Activated T-helper 2 cell treated with anti-CD3 and anti-CD28 coated beads, Interferon-gamma antibody, Interleukin-2, Interleukin-4, amounts not matched to agents 10 μg/mL and 5 μg/mL and 100 μg/mL, durations not matched to agents 14 hours and 24 hours and 36 hours (primary cell): ENCODE measurements at regions of chr22 and their contacts with region 1.

Region 1: GRCh38 chr22:30104501-30105156 is 24.4 kb downstream of the HORMAD2 start:
- DNase-seq: no peak
- H3K4me3 Mint-ChIP-seq: peak overlapping the region; percentile 26
- H3K27ac Mint-ChIP-seq: peak overlapping the region; percentile 95
- H3K4me1 Mint-ChIP-seq: peaks cover 64% of the 10 kb centered on the region
- H3K27me3 Mint-ChIP-seq: no peaks in the 10 kb centered on the region

Region 2: DNA sequence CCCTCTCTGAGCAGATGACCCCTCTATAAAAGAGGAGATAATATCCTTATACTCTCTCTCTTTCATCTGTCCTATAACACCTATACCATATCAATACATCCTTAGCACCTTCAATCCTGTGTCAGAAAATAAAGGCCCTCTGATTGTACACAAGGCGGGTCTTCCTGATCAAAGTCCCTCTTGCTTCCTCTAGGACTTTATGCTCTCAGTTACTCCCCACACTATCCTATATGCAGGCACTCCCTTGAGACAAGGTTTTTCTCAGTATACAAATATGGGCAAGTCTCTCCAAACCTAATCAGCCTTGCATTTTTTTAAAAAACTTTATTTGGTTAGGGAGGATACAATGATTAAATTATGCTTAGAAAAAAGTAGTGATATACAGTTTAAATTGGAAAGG is 41.7 kb before region 1 on chr22:
- intact Hi-C with region 1: no loop called
- DNase-seq: no peak
- H3K4me3 Mint-ChIP-seq: no peak overlapping the region
- H3K27ac Mint-ChIP-seq: no peak overlapping the region
- H3K4me1 Mint-ChIP-seq: no peaks in the 10 kb centered on the region
- H3K27me3 Mint-ChIP-seq: peaks cover 24% of the 10 kb centered on the region

Region 3: GRCh38 chr22:30169002-30169401 is 64.4 kb after region 1 on chr22:
- intact Hi-C with region 1: loop called (anchors 2 kb)
- DNase-seq: no peak
- H3K4me3 Mint-ChIP-seq: no peak overlapping the region
- H3K27ac Mint-ChIP-seq: no peak overlapping the region
- H3K4me1 Mint-ChIP-seq: peaks cover 23% of the 10 kb centered on the region
- H3K27me3 Mint-ChIP-seq: no peaks in the 10 kb centered on the region

Region 4: DNA sequence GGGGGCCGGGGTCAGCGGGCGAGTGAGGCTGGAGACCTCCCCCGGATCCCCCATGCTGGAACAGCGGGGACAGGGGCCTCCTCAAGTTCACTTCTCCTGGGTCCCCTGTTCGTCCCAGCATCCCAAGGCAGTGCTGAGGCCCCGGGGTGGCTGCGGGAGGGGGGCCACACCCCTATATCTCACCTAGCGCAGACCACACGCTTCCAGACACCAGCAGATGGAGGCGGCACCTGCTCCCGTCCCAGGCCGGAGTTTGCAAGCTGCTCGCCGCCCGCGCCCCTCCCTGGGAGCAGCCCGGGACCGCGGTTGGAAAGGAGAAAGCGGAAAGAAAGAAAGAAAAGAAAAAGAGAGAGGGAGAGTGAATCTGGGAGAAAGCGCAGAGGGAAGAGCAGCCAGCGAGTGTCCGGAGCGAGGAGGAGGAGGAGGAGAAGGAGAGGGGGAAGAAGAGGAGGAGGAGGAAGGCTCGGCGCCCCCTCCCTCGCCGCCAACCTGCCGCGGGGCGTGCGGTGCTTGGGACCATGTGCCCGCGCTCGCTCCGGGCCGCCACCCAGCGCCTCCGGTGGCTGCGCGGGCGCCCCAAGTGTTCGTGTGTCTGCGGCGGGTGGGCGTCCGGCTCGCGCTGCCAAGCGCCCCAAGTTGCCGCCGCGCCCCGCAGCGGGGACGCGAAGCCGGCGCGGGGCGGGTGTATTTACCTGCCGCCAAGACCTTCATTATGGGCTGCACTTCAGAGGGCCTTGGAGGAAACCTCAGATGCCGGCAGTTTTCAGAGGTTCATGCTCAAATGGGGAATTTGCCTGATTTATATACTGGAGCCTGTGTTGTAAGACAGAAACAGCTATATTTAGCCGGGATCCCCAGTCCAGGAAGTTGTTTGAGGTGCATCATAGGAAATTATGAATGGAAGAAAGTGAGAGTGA is 141.6 kb after region 1 on chr22 and contains the start of gene LIF:
- intact Hi-C with region 1: loop called (anchors 2 kb)
- DNase-seq: peak; percentile 65
- H3K4me3 Mint-ChIP-seq: peak within 1 kb of the TSS; percentile 99
- H3K27ac Mint-ChIP-seq: peak within 1 kb of the TSS; percentile 99
- H3K4me1 Mint-ChIP-seq: peaks cover 66% of the 10 kb centered on the region
- H3K27me3 Mint-ChIP-seq: no peaks in the 10 kb centered on the region
- total RNA-seq, gene LIF: 919 and 932 TPM in 2 replicates

Region 5: DNA sequence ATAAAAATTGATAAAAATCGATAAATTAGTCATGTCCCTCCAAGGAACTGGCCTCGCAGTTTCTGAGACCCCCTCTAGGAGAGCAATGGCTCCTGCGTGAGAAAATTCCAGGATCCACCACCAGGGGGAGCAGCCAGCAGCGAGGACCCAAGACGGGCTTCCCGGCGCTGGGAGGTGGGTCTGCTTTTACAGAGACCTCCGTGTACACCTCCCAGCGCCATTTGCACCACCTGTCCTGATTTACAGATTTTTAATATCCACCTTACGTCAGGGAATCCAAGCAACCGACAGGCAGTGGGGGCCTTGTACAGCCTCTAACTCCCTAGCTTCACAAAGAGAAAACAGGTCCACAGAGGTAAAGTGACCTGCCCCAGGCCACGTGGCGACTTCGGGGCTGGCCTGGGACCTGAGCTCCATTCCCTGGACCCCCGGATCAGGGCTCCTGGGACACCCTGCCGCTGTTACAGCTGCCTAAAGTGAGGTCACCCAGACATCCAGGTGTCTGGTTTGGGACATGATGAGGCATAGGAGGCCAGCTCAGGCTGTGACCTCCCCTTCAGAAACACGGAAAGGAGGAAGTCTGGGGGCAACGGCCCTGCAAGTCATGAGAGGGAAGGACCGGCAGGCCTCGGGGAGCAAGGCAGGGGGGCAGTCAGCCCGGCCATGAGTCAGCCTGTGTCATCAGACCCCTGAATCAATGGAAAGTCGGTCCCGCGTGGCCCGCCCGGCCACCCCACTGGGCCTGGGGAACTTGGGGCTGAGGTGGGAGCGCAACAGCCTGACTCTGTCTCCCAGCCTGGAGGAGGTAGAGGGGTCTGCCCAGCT is 158.5 kb after region 1 on chr22:
- intact Hi-C with region 1: loop called (anchors 5 kb)
- DNase-seq: peak; percentile 69
- H3K4me3 Mint-ChIP-seq: peak overlapping the region; percentile 96
- H3K27ac Mint-ChIP-seq: peak overlapping the region; percentile 77
- H3K4me1 Mint-ChIP-seq: peaks cover 32% of the 10 kb centered on the region
- H3K27me3 Mint-ChIP-seq: no peaks in the 10 kb centered on the region

Region 6: DNA sequence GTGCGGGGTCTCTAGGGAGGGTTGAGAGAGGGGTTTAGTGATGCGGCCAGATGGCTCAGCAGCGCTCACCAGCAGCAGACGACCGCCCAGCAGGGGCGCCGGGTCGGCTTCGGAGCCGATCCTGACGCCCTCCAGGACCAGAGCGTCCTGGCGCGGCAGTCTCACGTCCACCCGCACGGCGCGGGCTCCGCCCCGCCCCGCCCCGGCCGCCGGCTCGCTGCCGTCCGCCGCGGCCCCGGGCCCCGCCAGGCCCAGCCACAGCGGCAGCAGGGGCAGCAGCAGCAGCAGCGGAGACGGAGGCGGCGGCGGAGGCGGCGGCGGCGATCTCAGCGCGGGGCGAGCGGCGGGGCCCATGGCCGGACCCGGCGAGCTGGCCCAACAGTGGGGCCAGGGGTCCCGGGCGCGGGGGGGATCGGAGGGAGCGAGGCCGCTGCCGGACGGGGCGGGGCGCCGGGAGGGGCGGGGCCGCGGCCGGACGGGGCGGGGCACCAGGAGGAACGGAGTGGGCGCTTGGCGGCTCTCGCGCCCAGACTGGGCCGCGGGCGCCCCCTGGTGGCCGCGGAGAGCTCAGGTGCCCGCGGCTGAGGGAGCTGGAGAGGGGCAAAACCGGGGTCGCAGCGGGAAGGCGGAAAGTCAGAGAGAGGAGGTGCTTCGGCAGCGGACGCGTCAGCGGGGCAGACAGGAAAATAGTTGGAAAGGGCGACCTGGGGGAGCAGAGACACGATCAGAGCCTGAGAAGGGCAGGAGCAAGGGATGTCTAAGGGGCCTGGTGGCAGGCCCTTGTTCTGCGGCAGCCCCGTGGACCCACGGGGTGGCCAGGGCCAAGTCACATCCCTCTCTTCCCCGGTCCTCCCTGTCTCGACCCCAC is 282.6 kb after region 1 on chr22 and contains the start of gene RNF215:
- intact Hi-C with region 1: loop called (anchors 5 kb)
- DNase-seq: peak; percentile 76
- H3K4me3 Mint-ChIP-seq: peak within 1 kb of the TSS; percentile 84
- H3K27ac Mint-ChIP-seq: peak within 1 kb of the TSS; percentile 69
- H3K4me1 Mint-ChIP-seq: peaks cover 23% of the 10 kb centered on the region
- H3K27me3 Mint-ChIP-seq: no peaks in the 10 kb centered on the region
- total RNA-seq, gene RNF215: 17.2 and 19.3 TPM in 2 replicates

Region 7: GRCh38 chr22:30649430-30650007 is 544.9 kb after region 1 on chr22:
- intact Hi-C with region 1: no loop called
- DNase-seq: peak; percentile 65
- H3K4me3 Mint-ChIP-seq: no peak overlapping the region
- H3K27ac Mint-ChIP-seq: peak overlapping the region; percentile 83
- H3K4me1 Mint-ChIP-seq: peaks cover 39% of the 10 kb centered on the region
- H3K27me3 Mint-ChIP-seq: no peaks in the 10 kb centered on the region